A673 (cell line): ENCODE measurements at regions of chr17 and their contacts with region 1.

Region 1: GRCh38 chr17:59565171-59565969 is at the start of gene DHX40:
- DNase-seq: peak; percentile 97
- H3K4me3 ChIP-seq: peak within 1 kb of the TSS; percentile 88
- H3K27ac ChIP-seq: peak within 1 kb of the TSS; percentile 60
- H3K4me1 ChIP-seq: peaks cover 9% of the 10 kb centered on the region
- H3K27me3 ChIP-seq: no peaks in the 10 kb centered on the region
- CTCF ChIP-seq: no peak
- total RNA-seq, gene DHX40: 22.9 and 32.1 TPM in 2 replicates

Region 2: GRCh38 chr17:58577642-58578091 is 987.7 kb before region 1 on chr17:
- CTCF ChIA-PET with region 1: no interaction called
- POLR2A ChIA-PET with region 1: no interaction called
- intact Hi-C with region 1: loop called (anchors 10 kb)
- DNase-seq: peak; percentile 75
- H3K4me3 ChIP-seq: no peak overlapping the region
- H3K27ac ChIP-seq: no peak overlapping the region
- H3K4me1 ChIP-seq: no peaks in the 10 kb centered on the region
- H3K27me3 ChIP-seq: no peaks in the 10 kb centered on the region
- CTCF ChIP-seq: peak; percentile 79

Region 3: DNA sequence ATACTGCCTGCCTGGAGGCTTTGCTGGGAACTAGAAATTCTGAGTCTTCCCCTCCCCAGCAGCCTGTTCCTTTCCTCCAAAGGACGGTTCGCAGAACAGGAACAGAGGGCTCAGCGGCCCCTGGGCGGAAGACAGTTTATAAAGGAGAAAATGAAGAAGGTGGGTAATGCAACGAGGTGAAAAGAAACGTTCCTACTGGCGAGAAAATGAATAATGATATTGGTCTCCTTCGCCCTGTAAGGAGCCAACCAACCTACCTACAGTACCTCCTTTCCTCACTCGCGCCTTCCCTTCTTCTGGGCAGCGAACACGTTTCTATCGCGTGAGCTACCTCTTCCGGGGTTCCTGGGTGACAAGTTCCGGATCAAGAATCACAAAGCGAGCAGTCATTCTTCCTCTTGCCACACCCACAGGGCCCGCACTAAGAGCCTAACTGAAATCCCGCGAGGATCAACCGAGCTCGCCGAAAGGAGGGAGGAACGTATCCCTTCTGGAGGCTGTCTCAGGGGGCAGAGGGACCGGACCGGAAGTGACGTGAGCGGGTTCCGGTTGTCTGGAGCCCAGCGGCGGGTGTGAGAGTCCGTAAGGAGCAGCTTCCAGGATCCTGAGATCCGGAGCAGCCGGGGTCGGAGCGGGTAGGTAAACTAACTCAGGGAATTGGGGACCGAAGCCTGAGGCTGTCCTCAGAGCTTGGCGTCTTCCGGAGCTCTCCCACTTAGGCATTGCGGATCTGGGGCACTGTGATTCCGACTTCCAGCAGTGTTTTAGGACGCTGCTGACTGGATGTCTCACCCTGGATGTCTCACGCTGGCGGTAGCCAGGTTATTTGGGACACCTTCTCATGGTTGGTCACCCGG is 142.0 kb after region 1 on chr17 and contains the starts of genes PTRH2 and VMP1:
- CTCF ChIA-PET with region 1: no interaction called
- POLR2A ChIA-PET with region 1: no interaction called
- intact Hi-C with region 1: loop called (anchors 5 kb)
- DNase-seq: peak; percentile 100
- H3K4me3 ChIP-seq: peak within 1 kb of the TSS; percentile 95
- H3K27ac ChIP-seq: peak within 1 kb of the TSS; percentile 85
- H3K4me1 ChIP-seq: peaks cover 26% of the 10 kb centered on the region
- H3K27me3 ChIP-seq: no peaks in the 10 kb centered on the region
- CTCF ChIP-seq: no peak
- total RNA-seq, gene PTRH2: 46.8 and 50.3 TPM in 2 replicates
- total RNA-seq, gene VMP1: 107 and 110 TPM in 2 replicates